Ascending aorta (tissue), 2 donors: ENCODE measurements at regions of chr19 and their contacts with region 1.

Region 1: GRCh38 chr19:5292822-5293611 is 47.6 kb downstream of the PTPRS start:
- DNase-seq: peak in 1 of 2 donors; percentile 80
- H3K4me3 ChIP-seq: peak overlapping the region; percentile 46 to 92
- H3K27ac ChIP-seq: peak overlapping the region; percentile 11 to 82
- H3K4me1 ChIP-seq: peaks cover 9 to 10% of the 10 kb centered on the region in 2 donors
- H3K27me3 ChIP-seq: no peaks in the 10 kb centered on the region
- CTCF ChIP-seq: no peak

Region 2: GRCh38 chr19:4867534-4868285 is 425.3 kb before region 1 on chr19 and contains the start of gene PLIN3:
- intact Hi-C with region 1: loop called (anchors 10 kb)
- DNase-seq: peak; percentile 89 to 98
- H3K4me3 ChIP-seq: peak within 1 kb of the TSS; percentile 71 to 83
- H3K27ac ChIP-seq: peak within 1 kb of the TSS; percentile 68 to 81
- H3K4me1 ChIP-seq: peaks cover 5 to 17% of the 10 kb centered on the region in 2 donors
- H3K27me3 ChIP-seq: no peaks in the 10 kb centered on the region
- CTCF ChIP-seq: no peak
- total RNA-seq, gene PLIN3: 84.3 TPM

Region 3: DNA sequence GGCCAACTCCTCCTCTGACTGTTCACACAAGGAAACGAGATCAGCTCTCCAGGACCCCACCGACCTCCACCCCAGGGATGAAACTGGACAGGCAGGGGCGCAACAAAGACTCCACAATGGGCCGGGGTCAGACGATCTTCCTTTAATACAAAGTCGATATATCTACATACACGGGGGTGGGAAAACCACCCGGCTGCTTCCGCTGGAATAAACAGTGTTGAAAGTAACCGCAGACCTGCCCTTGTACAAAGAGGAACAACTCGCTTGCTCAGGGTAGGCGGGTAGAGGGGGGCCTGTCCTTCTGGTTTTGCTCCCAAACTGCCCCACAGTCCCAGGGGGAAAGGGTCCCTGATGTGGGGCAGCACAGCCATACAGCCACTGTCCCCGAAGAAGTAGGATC is 87.6 kb before region 1 on chr19:
- intact Hi-C with region 1: no loop called
- DNase-seq: no peak
- H3K4me3 ChIP-seq: no peak overlapping the region
- H3K27ac ChIP-seq: no peak overlapping the region
- H3K4me1 ChIP-seq: peaks cover 0 to 5% of the 10 kb centered on the region in 2 donors
- H3K27me3 ChIP-seq: no peaks in the 10 kb centered on the region
- CTCF ChIP-seq: no peak

Region 4: DNA sequence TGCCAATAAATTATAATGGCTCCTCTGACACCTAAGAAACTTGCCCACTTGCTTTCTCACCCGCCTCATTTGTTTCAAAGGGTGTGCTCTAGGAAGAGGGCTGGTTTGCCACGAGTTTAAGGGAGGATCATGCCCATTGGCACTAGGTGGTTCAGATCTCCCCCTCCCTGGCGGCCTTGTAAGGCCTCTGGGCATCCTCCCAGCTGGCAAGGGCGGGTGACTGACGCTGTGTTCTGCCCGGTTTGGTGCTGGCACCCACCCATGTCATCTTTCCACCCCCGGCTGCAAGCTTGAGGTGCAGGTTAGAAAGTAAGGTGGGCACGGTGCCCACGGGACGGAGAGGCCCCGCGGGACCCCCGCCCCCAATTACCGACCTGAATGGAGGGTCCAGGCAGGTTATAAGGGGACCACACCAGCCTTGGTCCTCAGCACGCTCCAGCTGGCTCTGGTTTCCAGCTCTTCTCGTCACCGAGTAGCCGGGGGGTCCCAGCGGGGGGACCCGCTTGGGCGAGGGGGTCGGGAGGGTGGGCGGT is 42.8 kb before region 1 on chr19:
- intact Hi-C with region 1: loop called (anchors 2 kb)
- DNase-seq: peak; percentile 34 to 87
- H3K4me3 ChIP-seq: peak overlapping the region in 1 of 2 donors; percentile 38
- H3K27ac ChIP-seq: no peak overlapping the region
- H3K4me1 ChIP-seq: peaks cover 0 to 8% of the 10 kb centered on the region in 2 donors
- H3K27me3 ChIP-seq: no peaks in the 10 kb centered on the region
- CTCF ChIP-seq: no peak

Region 5: GRCh38 chr19:5261188-5261890 is 31.7 kb before region 1 on chr19:
- intact Hi-C with region 1: no loop called
- DNase-seq: no peak
- H3K4me3 ChIP-seq: no peak overlapping the region
- H3K27ac ChIP-seq: no peak overlapping the region
- H3K4me1 ChIP-seq: no peaks in the 10 kb centered on the region
- H3K27me3 ChIP-seq: no peaks in the 10 kb centered on the region
- CTCF ChIP-seq: no peak

Region 6: GRCh38 chr19:5308471-5309437 is 15.7 kb after region 1 on chr19:
- intact Hi-C with region 1: loop called (anchors 1 kb)
- DNase-seq: peak; percentile 47 to 88
- H3K4me3 ChIP-seq: peak overlapping the region in 1 of 2 donors; percentile 55
- H3K27ac ChIP-seq: peak overlapping the region; percentile 80
- H3K4me1 ChIP-seq: peaks cover 0 to 3% of the 10 kb centered on the region in 2 donors
- H3K27me3 ChIP-seq: no peaks in the 10 kb centered on the region
- CTCF ChIP-seq: no peak

Region 7: GRCh38 chr19:5340637-5341447 is 47.8 kb after region 1 on chr19 and contains the start of gene PTPRS:
- intact Hi-C with region 1: loop called (anchors 1 kb)
- DNase-seq: peak in 1 of 2 donors; percentile 82
- H3K4me3 ChIP-seq: peak within 1 kb of the TSS; percentile 71 to 80
- H3K27ac ChIP-seq: no peak within 1 kb of the TSS
- H3K4me1 ChIP-seq: peaks cover 7 to 16% of the 10 kb centered on the region in 2 donors
- H3K27me3 ChIP-seq: peaks cover 4% of the 10 kb centered on the region
- CTCF ChIP-seq: no peak
- total RNA-seq, gene PTPRS: 517 TPM

Region 8: GRCh38 chr19:5680437-5681368 is 387.7 kb after region 1 on chr19 and contains the starts of genes HSD11B1L and MICOS13:
- intact Hi-C with region 1: loop called (anchors 5 kb)
- DNase-seq: peak; percentile 97 to 99
- H3K4me3 ChIP-seq: peak within 1 kb of the TSS; percentile 77 to 96
- H3K27ac ChIP-seq: peak within 1 kb of the TSS; percentile 80 to 95
- H3K4me1 ChIP-seq: peaks cover 6 to 9% of the 10 kb centered on the region in 2 donors
- H3K27me3 ChIP-seq: no peaks in the 10 kb centered on the region
- CTCF ChIP-seq: no peak
- total RNA-seq, gene HSD11B1L: 116 TPM
- total RNA-seq, gene MICOS13: 75.6 TPM